ENCODE measurements at regions of chr5 and their contacts with region 1.

Region 1: DNA sequence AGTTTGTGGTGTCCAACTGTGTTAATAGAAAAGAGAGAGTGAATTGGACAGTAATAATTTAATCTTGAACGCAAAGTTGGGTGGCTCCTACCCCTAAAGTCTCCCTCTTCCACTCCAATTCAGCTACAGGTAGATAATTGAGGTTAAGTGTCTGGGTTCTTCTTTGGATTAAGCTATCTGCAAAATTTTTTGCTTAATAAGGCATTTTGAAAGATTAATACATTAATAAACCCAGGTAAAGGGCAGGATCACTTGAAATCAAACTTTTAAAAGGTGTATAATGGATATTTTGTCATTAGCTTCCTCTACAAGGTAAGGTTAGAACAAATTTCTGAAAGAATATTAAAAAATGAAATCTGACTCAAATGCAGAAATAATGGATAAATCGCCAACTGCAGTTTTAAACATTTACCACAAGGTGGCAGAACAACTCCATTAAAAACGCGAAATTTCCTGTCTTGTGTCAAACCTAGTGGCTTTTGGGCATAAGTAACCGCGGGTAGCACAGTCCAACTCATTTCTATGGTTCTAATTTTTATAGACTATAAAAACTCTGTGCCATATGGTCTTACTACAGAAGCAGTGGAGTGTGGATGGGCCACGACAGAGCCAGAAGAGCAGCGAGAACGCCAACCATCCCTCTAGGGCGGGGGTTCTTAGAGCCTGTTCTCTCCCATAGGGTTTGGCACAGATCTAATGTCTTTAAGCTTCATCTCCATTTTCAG is 276.5 kb downstream of the ARHGEF28 start:
- DNase-seq: peak; percentile 44
- CTCF ChIP-seq: peak; percentile 72

Region 2: DNA sequence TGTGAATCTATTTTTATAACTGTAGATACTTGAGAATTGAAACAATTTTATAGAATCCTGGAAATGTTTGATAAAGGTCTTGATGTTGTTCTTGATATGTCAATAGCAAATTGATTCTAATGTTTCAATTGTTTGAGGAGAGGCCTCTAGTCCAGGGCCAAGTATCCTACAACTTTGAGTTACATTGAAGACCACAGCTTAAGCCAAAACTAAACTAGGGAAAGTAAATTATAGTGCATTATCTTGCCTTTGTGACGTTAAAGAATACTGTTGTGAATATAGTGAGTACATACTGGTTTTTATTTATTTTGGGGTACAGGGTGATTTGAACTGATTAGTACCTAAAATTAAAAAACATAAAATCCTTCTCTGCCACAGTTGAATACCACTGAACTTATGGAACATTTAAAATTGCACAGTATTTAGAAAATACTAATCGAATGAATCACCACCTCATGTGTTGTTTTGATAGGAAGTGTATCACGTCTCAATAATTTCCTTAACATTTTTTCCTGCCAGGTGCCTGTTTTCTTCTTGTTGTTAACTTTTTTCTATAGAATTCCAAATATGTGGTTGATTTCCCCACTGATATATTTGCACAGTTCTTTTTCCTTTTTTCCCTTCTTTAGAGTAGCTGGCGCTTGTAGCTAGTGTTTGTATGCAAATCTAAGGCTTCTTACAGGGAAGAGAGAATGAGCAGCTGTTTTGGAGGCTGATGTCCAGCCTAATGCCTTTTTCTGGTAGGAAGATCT is 264.0 kb before region 1 on chr5:
- CTCF ChIA-PET with region 1: no interaction called
- POLR2A ChIA-PET with region 1: no interaction called
- DNase-seq: no peak
- CTCF ChIP-seq: no peak

Region 3: GRCh38 chr5:73887683-73888082 is 14.8 kb before region 1 on chr5:
- CTCF ChIA-PET with region 1: interaction called, 12 read pairs
- POLR2A ChIA-PET with region 1: no interaction called
- DNase-seq: no peak
- CTCF ChIP-seq: no peak

Region 4: DNA sequence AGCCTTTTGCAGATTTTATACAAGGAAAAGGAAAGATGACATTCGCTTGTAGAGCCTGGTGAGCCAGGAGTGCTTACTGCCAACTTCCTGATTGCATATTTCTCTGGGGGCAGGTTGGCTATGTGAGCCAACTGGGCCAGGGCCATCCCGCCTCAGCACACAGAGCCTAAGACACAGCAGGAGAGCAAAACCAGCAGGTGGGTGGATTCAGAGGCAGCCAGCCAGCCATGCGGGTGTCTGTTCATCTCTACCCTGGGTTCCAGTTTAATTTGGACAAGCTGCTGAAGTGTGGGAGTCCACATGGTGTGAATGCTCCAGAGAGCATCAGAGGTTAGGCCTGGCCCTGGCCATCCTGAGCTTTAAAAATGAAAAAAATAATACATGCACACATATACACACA is 14.9 kb after region 1 on chr5:
- CTCF ChIA-PET with region 1: interaction called, 30 read pairs
- POLR2A ChIA-PET with region 1: no interaction called
- DNase-seq: no peak
- CTCF ChIP-seq: no peak

Region 5: GRCh38 chr5:74632947-74633356 is 730.5 kb after region 1 on chr5:
- CTCF ChIA-PET with region 1: interaction called, 18 read pairs
- POLR2A ChIA-PET with region 1: no interaction called
- DNase-seq: peak; percentile 24
- CTCF ChIP-seq: no peak

Region 6: DNA sequence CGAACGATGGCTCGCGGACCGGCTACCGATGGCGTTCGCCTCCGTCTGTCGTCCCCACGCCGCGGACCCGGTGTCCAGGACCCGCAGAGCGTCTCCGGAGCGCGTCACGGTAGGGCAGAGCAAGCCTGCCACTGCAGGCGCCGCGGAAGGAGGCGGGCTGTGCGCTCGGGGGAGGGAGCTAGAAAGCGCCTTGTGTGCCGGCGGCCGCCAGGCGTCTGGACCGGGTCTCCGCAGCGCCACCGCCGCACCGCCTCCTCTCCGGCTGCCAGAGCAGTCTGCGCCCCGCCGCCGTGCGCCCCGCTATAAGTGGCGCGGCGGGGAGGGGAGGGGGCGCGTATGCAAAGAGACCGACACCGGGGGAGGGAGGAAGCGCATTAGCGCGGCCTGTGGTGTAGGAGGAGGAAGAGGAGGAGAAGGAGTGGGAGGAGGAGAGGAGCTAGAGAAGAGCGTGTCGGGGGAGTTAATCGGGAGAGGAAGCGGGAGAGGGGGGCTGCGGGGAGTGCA is 738.0 kb after region 1 on chr5 and contains the start of gene ENC1:
- CTCF ChIA-PET with region 1: interaction called, 45 read pairs
- POLR2A ChIA-PET with region 1: no interaction called
- DNase-seq: peak; percentile 72
- CTCF ChIP-seq: peak; percentile 9

Region 7: DNA sequence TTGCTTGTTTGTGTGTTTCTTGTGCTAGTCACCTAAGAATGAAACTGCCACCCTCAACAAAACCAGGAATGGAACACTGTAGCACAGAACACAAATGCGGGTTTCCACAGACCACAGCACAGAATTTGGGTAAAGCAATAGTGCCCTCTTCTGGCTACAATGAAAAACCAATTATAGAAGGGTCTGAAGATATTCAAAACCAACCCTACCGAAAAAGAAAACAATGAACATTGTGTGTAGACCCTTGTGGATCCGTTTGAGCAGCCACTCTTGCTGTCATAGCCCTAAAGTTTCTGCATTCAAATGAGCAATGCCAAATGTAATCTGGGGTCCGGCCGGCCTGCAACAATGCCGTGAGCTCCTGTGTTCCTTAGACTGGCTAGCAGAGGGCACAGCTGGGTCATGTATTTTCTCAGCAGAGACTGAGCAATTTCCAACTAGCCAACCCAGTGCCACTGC is 746.4 kb after region 1 on chr5:
- CTCF ChIA-PET with region 1: interaction called, 52 read pairs
- POLR2A ChIA-PET with region 1: no interaction called
- DNase-seq: peak; percentile 65
- CTCF ChIP-seq: peak; percentile 32

Region 8: GRCh38 chr5:74653991-74654390 is 751.5 kb after region 1 on chr5:
- CTCF ChIA-PET with region 1: interaction called, 52 read pairs
- POLR2A ChIA-PET with region 1: no interaction called
- DNase-seq: no peak
- CTCF ChIP-seq: no peak

Measured in GM10248 (cell line).